ENCODE measurements at regions of chr7 and their contacts with region 1.

Region 1: GRCh38 chr7:87219545-87220025 is at the start of gene TMEM243:
- DNase-seq: peak; percentile 87
- H3K4me3 ChIP-seq: peak within 1 kb of the TSS; percentile 32 to 76 (median 63)
- H3K27ac ChIP-seq: peak within 1 kb of the TSS; percentile 59
- H3K4me1 ChIP-seq: peaks cover 18% of the 10 kb centered on the region
- H3K27me3 ChIP-seq: peaks cover 3 to 13% of the 10 kb centered on the region in 2 experiments
- CTCF ChIP-seq: peak in 1 of 2 donors; percentile 8
- POLR2A ChIP-seq: peak; percentile 35
- total RNA-seq, gene TMEM243: 26.9 and 31.5 TPM in 2 replicates

Region 2: DNA sequence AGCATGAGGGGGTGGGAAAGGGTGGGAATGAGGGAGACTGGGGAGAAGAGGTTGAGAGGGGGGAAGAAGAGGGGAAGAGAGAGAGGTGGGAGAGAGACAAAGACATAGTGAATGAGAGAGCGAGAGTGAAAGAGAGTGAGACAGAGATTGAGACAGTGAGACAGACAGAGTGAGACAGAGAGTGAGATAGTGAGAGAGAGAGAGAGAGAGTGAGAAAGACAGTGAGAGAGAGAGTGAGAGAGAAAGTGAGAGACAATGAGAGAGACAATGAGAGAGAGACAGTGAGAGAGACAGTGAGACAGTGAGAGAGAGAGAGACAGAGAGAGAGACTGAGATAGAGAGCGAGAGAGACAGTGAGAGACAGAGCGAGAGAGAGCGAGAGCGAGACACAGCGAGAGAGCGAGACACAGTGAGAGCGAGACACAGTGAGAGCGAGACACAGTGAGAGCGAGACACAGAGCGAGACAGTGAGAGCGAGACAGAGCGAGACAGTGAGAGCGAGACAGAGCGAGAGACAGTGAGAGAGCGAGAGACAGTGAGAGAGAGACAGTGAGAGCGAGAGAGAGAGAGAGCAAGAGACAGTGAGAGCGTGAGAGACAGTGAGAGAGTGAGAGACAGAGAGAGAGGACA is 10.2 kb before region 1 on chr7:
- CTCF ChIA-PET with region 1: interaction called, 6 read pairs
- POLR2A ChIA-PET with region 1: interaction called, 12 read pairs
- dilution Hi-C with region 1: no loop called
- intact Hi-C with region 1: no loop called
- DNase-seq: no peak
- H3K4me3 ChIP-seq: no peak overlapping the region
- H3K27ac ChIP-seq: no peak overlapping the region
- H3K4me1 ChIP-seq: no peaks in the 10 kb centered on the region
- H3K27me3 ChIP-seq: no peaks in the 10 kb centered on the region
- CTCF ChIP-seq: no peak
- POLR2A ChIP-seq: no peak

Region 3: GRCh38 chr7:87960239-87960638 is 740.7 kb after region 1 on chr7:
- CTCF ChIA-PET with region 1: no interaction called
- POLR2A ChIA-PET with region 1: no interaction called
- dilution Hi-C with region 1: no loop called
- intact Hi-C with region 1: no loop called
- DNase-seq: no peak
- H3K4me3 ChIP-seq: no peak overlapping the region
- H3K27ac ChIP-seq: no peak overlapping the region
- H3K4me1 ChIP-seq: no peaks in the 10 kb centered on the region
- H3K27me3 ChIP-seq: no peaks in the 10 kb centered on the region
- CTCF ChIP-seq: no peak
- POLR2A ChIP-seq: no peak

Measured in endothelial cell of umbilical vein (primary cell).